ENCODE measurements at regions of chr1 and their contacts with region 1.

Region 1: GRCh38 chr1:156319664-156320063 is 18.4 kb downstream of the CCT3 start:
- DNase-seq: peak; percentile 38
- ATAC-seq: no peak
- H3K4me3 Mint-ChIP-seq: no peak overlapping the region
- H3K27ac Mint-ChIP-seq: no peak overlapping the region
- H3K4me1 Mint-ChIP-seq: no peaks in the 10 kb centered on the region
- H3K27me3 Mint-ChIP-seq: no peaks in the 10 kb centered on the region

Region 2: GRCh38 chr1:156090822-156091188 is 228.9 kb before region 1 on chr1:
- CTCF ChIA-PET with region 1: interaction called, 4 read pairs
- POLR2A ChIA-PET with region 1: no interaction called
- intact Hi-C with region 1: loop called in 1 of 2 experiments (anchors 1 kb)
- DNase-seq: peak; percentile 95
- ATAC-seq: peak; percentile 95
- H3K4me3 Mint-ChIP-seq: no peak overlapping the region
- H3K27ac Mint-ChIP-seq: no peak overlapping the region
- H3K4me1 Mint-ChIP-seq: peaks cover 12% of the 10 kb centered on the region
- H3K27me3 Mint-ChIP-seq: peaks cover 16% of the 10 kb centered on the region

Region 3: GRCh38 chr1:156140879-156141252 is 178.8 kb before region 1 on chr1:
- CTCF ChIA-PET with region 1: interaction called, 13 read pairs
- POLR2A ChIA-PET with region 1: no interaction called
- intact Hi-C with region 1: loop called (anchors 1 to 10 kb)
- DNase-seq: no peak
- ATAC-seq: no peak
- H3K4me3 Mint-ChIP-seq: no peak overlapping the region
- H3K27ac Mint-ChIP-seq: peak overlapping the region; percentile 5
- H3K4me1 Mint-ChIP-seq: peaks cover 4% of the 10 kb centered on the region
- H3K27me3 Mint-ChIP-seq: no peaks in the 10 kb centered on the region

Region 4: GRCh38 chr1:156146020-156146768 is 173.5 kb before region 1 on chr1:
- CTCF ChIA-PET with region 1: interaction called, 13 read pairs
- POLR2A ChIA-PET with region 1: no interaction called
- intact Hi-C with region 1: loop called (anchors 1 to 10 kb)
- DNase-seq: peak; percentile 67
- ATAC-seq: peak; percentile 82
- H3K4me3 Mint-ChIP-seq: peak overlapping the region; percentile 37
- H3K27ac Mint-ChIP-seq: peak overlapping the region; percentile 85
- H3K4me1 Mint-ChIP-seq: peaks cover 46% of the 10 kb centered on the region
- H3K27me3 Mint-ChIP-seq: no peaks in the 10 kb centered on the region